B cell (primary cell): ENCODE measurements at regions of chr4 and their contacts with region 1.

Region 1: GRCh38 chr4:38759113-38759789 is 23.5 kb downstream of the TLR10 start:
- DNase-seq: peak; percentile 84
- ATAC-seq: no peak
- H3K4me3 ChIP-seq: no peak overlapping the region
- H3K4me3 Mint-ChIP-seq: peak overlapping the region; percentile 26
- H3K27ac ChIP-seq: peak overlapping the region; percentile 6 to 11
- H3K27ac Mint-ChIP-seq: peak overlapping the region; percentile 83
- H3K4me1 ChIP-seq: peaks cover 59 to 70% of the 10 kb centered on the region in 2 donors
- H3K4me1 Mint-ChIP-seq: peaks cover 57% of the 10 kb centered on the region
- H3K27me3 ChIP-seq: no peaks in the 10 kb centered on the region
- H3K27me3 Mint-ChIP-seq: no peaks in the 10 kb centered on the region
- CTCF ChIP-seq: peak; percentile 78

Region 2: DNA sequence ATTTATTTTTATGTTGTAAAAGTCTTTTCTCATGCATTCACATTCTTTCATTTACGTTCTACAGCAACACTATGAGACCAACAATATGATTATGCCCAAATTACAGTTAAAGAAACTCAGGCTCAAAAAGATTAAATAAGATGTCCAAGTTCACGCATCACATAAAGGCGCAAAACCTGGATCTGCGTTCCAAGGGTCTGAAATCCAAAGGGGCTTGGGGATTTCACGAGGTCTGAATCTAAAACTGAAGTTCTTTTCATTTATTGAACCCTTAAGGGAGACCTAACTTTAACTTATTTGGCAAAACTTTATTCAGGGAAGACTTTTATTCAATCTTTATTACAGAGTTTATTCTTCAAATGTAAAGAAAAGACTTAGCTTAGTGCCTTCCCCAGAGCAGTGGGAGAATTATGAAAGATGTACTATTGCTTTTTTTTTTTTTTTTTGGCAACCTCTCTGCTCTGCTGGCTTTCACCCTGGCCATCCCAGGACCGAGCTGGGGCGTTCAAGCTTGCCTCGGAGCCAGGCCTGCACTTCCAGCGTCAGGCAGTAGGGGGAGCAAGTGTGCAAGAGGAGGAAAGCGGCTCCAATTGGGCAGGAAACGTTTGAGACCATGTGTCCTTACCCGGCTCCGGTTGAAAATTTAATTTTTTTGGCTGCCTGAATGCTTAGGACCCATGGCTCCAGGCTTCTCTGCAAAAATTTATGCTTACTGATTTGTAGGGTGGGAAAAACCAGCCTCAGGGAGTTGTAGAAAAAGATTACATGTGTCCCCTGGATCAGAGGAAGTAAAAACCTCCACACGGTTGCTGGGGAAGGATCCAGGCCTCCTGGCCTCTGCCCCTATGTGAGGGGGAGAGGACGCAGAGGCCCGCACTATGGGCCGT is 439.6 kb before region 1 on chr4:
- CTCF ChIA-PET with region 1: interaction called, 6 read pairs
- POLR2A ChIA-PET with region 1: interaction called, 3 read pairs
- intact Hi-C with region 1: loop called (anchors 1 kb)
- DNase-seq: peak; percentile 85
- ATAC-seq: peak; percentile 81
- H3K4me3 ChIP-seq: peak overlapping the region; percentile 43 to 74 (median 54)
- H3K4me3 Mint-ChIP-seq: peak overlapping the region; percentile 83
- H3K27ac ChIP-seq: peak overlapping the region; percentile 82 to 87
- H3K27ac Mint-ChIP-seq: peak overlapping the region; percentile 86
- H3K4me1 ChIP-seq: peaks cover 16 to 21% of the 10 kb centered on the region in 2 donors
- H3K4me1 Mint-ChIP-seq: peaks cover 29% of the 10 kb centered on the region
- H3K27me3 ChIP-seq: no peaks in the 10 kb centered on the region
- H3K27me3 Mint-ChIP-seq: no peaks in the 10 kb centered on the region
- CTCF ChIP-seq: peak; percentile 93

Region 3: GRCh38 chr4:38449506-38450174 is 309.6 kb before region 1 on chr4:
- CTCF ChIA-PET with region 1: no interaction called
- POLR2A ChIA-PET with region 1: no interaction called
- intact Hi-C with region 1: no loop called
- DNase-seq: no peak
- ATAC-seq: no peak
- H3K4me3 ChIP-seq: no peak overlapping the region
- H3K4me3 Mint-ChIP-seq: no peak overlapping the region
- H3K27ac ChIP-seq: no peak overlapping the region
- H3K27ac Mint-ChIP-seq: no peak overlapping the region
- H3K4me1 ChIP-seq: no peaks in the 10 kb centered on the region
- H3K4me1 Mint-ChIP-seq: no peaks in the 10 kb centered on the region
- H3K27me3 ChIP-seq: peaks cover 0 to 3% (median 0%) of the 10 kb centered on the region in 4 experiments
- H3K27me3 Mint-ChIP-seq: peaks cover 20% of the 10 kb centered on the region
- CTCF ChIP-seq: no peak

Region 4: DNA sequence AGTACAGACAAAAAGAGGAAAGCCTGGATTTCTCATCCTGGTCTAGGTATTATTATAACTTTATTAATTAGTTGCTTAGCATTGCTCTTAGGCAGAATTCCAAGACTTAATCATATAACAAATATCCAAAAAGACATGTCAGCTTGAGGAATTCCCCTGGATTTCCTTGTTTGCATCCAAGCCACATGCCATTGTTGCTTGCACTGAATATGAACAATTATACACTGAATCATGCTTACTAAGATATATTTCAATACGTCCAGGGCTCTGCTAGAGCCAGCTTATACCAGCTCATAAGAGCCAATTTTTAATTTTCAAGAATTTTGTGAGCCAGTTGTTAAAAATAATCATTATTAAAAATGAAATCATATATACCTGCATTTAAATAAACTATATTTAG is 29.1 kb after region 1 on chr4:
- CTCF ChIA-PET with region 1: interaction called, 620 read pairs
- POLR2A ChIA-PET with region 1: interaction called, 110 read pairs
- intact Hi-C with region 1: no loop called
- DNase-seq: no peak
- ATAC-seq: no peak
- H3K4me3 ChIP-seq: no peak overlapping the region
- H3K4me3 Mint-ChIP-seq: no peak overlapping the region
- H3K27ac ChIP-seq: no peak overlapping the region
- H3K27ac Mint-ChIP-seq: no peak overlapping the region
- H3K4me1 ChIP-seq: peaks cover 8 to 20% of the 10 kb centered on the region in 2 donors
- H3K4me1 Mint-ChIP-seq: peaks cover 31% of the 10 kb centered on the region
- H3K27me3 ChIP-seq: no peaks in the 10 kb centered on the region
- H3K27me3 Mint-ChIP-seq: no peaks in the 10 kb centered on the region
- CTCF ChIP-seq: no peak

Region 5: GRCh38 chr4:38867478-38868058 is 108.3 kb after region 1 on chr4 and contains the start of gene FAM114A1:
- CTCF ChIA-PET with region 1: interaction called, 170 read pairs
- POLR2A ChIA-PET with region 1: no interaction called
- intact Hi-C with region 1: no loop called
- DNase-seq: peak; percentile 54
- ATAC-seq: peak; percentile 99
- H3K4me3 ChIP-seq: peak within 1 kb of the TSS; percentile 50 to 63 (median 60)
- H3K4me3 Mint-ChIP-seq: peak within 1 kb of the TSS; percentile 89
- H3K27ac ChIP-seq: peak within 1 kb of the TSS in 1 of 2 donors; percentile 54
- H3K27ac Mint-ChIP-seq: peak within 1 kb of the TSS; percentile 60
- H3K4me1 ChIP-seq: peaks cover 10 to 12% of the 10 kb centered on the region in 2 donors
- H3K4me1 Mint-ChIP-seq: peaks cover 11% of the 10 kb centered on the region
- H3K27me3 ChIP-seq: no peaks in the 10 kb centered on the region
- H3K27me3 Mint-ChIP-seq: no peaks in the 10 kb centered on the region
- CTCF ChIP-seq: no peak
- total RNA-seq, gene FAM114A1: 2.2 and 2.9 TPM in 2 replicates

Region 6: GRCh38 chr4:38902695-38903094 is 143.4 kb after region 1 on chr4:
- CTCF ChIA-PET with region 1: interaction called, 122 read pairs
- POLR2A ChIA-PET with region 1: no interaction called
- intact Hi-C with region 1: loop called (anchors 2 kb)
- DNase-seq: peak; percentile 67
- ATAC-seq: peak; percentile 73
- H3K4me3 ChIP-seq: no peak overlapping the region
- H3K4me3 Mint-ChIP-seq: no peak overlapping the region
- H3K27ac ChIP-seq: no peak overlapping the region
- H3K27ac Mint-ChIP-seq: no peak overlapping the region
- H3K4me1 ChIP-seq: no peaks in the 10 kb centered on the region
- H3K4me1 Mint-ChIP-seq: peaks cover 6% of the 10 kb centered on the region
- H3K27me3 ChIP-seq: no peaks in the 10 kb centered on the region
- H3K27me3 Mint-ChIP-seq: no peaks in the 10 kb centered on the region
- CTCF ChIP-seq: peak; percentile 73

Region 7: GRCh38 chr4:39181905-39182638 is 422.8 kb after region 1 on chr4 and contains the start of gene WDR19:
- CTCF ChIA-PET with region 1: interaction called, 4 read pairs
- POLR2A ChIA-PET with region 1: no interaction called
- intact Hi-C with region 1: loop called (anchors 1 kb)
- DNase-seq: peak; percentile 99
- ATAC-seq: peak; percentile 96
- H3K4me3 ChIP-seq: peak within 1 kb of the TSS; percentile 76 to 99 (median 94)
- H3K4me3 Mint-ChIP-seq: peak within 1 kb of the TSS; percentile 47
- H3K27ac ChIP-seq: peak within 1 kb of the TSS; percentile 12 to 79
- H3K27ac Mint-ChIP-seq: no peak within 1 kb of the TSS
- H3K4me1 ChIP-seq: peaks cover 12 to 16% of the 10 kb centered on the region in 2 donors
- H3K4me1 Mint-ChIP-seq: peaks cover 8% of the 10 kb centered on the region
- H3K27me3 ChIP-seq: no peaks in the 10 kb centered on the region
- H3K27me3 Mint-ChIP-seq: no peaks in the 10 kb centered on the region
- CTCF ChIP-seq: peak; percentile 73
- total RNA-seq, gene WDR19: 79.8 and 83.2 TPM in 2 replicates